ENCODE measurements at regions of chr6 and their contacts with region 1.

Region 1: GRCh38 chr6:145734486-145735355 is 599 bp downstream of the EPM2A start:
- DNase-seq: peak; percentile 78 to 85
- ATAC-seq: peak; percentile 84 to 89
- H3K4me3 ChIP-seq: peak overlapping the region; percentile 75 to 86 (median 81)
- H3K27ac ChIP-seq: peak overlapping the region; percentile 90 to 99 (median 94)
- H3K4me1 ChIP-seq: peaks cover 15 to 31% of the 10 kb centered on the region in 2 donors
- H3K27me3 ChIP-seq: no peaks in the 10 kb centered on the region
- CTCF ChIP-seq: no peak
- POLR2A ChIP-seq: no peak

Region 2: GRCh38 chr6:144840619-144841018 is 894.1 kb before region 1 on chr6:
- in situ Hi-C with region 1: no loop called
- intact Hi-C with region 1: no loop called
- DNase-seq: no peak
- ATAC-seq: no peak
- H3K4me3 ChIP-seq: no peak overlapping the region
- H3K27ac ChIP-seq: no peak overlapping the region
- H3K4me1 ChIP-seq: no peaks in the 10 kb centered on the region
- H3K27me3 ChIP-seq: no peaks in the 10 kb centered on the region
- CTCF ChIP-seq: no peak
- POLR2A ChIP-seq: no peak

Region 3: DNA sequence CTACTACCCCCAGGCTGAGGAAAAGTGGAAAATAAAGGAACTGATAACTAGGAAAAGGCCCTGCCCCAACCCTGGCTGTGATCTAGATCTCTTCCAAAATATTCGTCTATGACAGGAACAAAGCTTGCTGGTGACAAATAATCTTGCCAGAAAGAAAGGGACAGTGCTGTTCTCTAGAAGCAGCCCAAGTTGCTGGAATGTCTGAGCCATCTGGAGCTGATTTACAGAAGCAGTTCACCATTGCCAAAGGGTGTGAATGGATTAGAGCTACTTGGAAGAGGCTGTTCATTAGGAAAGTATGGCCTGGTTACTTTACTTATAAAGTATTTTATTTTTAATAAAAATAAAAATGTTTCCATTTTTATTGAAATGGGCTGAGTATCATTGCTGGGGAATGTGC is 145.7 kb before region 1 on chr6:
- in situ Hi-C with region 1: no loop called
- intact Hi-C with region 1: no loop called
- DNase-seq: no peak
- ATAC-seq: no peak
- H3K4me3 ChIP-seq: no peak overlapping the region
- H3K27ac ChIP-seq: no peak overlapping the region
- H3K4me1 ChIP-seq: no peaks in the 10 kb centered on the region
- H3K27me3 ChIP-seq: no peaks in the 10 kb centered on the region
- CTCF ChIP-seq: no peak
- POLR2A ChIP-seq: no peak

Region 4: DNA sequence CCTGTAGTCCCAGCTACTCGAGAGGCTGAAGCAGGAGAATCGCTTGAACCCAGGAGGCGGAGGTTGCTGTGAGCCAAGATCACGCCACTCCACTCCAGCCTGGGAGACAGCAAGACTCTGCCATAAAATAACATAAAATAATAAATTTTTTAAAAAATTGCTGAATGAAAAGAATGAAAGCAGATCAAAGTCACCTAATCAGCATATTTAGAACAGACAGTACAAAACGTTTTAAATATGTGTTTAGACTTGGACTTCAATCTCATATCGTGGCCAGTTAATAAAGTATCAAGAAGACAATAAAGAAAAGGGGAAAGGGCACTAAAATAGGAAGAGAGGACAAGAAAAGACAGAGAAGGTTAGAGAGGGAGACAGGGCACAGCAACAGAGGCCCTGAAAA is 74.0 kb before region 1 on chr6:
- in situ Hi-C with region 1: no loop called
- intact Hi-C with region 1: no loop called
- DNase-seq: no peak
- ATAC-seq: no peak
- H3K4me3 ChIP-seq: no peak overlapping the region
- H3K27ac ChIP-seq: no peak overlapping the region
- H3K4me1 ChIP-seq: no peaks in the 10 kb centered on the region
- H3K27me3 ChIP-seq: no peaks in the 10 kb centered on the region
- CTCF ChIP-seq: no peak
- POLR2A ChIP-seq: no peak

Region 5: DNA sequence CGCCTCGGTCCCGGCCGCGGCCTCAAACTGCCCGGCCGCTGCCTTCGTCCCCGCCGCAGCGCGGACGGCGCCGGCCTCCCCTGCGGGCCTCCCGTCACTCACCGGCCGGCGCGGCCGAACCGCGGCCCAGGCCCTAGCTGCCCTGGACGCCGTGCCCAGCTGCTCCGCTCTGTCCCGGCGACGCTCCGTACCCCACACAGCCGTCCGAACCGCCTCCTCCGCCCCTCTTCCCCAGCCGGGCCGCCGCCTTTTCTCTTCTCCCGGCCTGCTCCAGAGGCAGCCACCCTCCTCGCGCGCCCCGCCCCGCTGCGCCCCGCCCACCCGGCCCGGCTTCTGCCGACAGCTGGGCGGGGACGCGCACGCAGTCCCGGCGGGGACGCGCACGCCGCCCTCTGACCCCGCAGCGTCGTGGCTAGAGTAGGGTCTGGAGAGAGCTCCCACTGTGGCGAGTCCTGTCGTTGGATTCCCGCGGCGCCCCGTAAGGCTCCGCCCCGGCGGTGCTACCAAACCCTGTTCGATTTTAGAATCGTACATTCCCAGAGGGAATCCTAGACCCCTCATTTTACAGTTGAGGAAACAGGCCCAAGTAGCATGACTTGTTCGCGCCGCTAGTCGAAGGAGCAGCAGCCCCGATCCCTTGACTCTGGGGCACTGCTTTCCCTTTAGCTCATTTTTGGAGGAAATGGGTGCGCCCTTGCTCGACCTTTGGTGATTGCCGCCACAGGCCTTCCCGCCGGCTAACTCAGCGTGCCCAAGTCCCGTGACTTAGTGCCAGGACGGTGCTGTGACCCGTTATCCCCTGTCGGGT is 80.0 kb after region 1 on chr6 and contains the start of gene FBXO30:
- in situ Hi-C with region 1: loop called in 3 of 4 experiments (anchors 5 to 10 kb)
- intact Hi-C with region 1: loop called (anchors 1 kb)
- DNase-seq: peak; percentile 76 to 88
- ATAC-seq: peak; percentile 79 to 82
- H3K4me3 ChIP-seq: peak within 1 kb of the TSS; percentile 76 to 95 (median 84)
- H3K27ac ChIP-seq: peak within 1 kb of the TSS; percentile 91 to 99 (median 94)
- H3K4me1 ChIP-seq: peaks cover 45 to 54% of the 10 kb centered on the region in 2 donors
- H3K27me3 ChIP-seq: no peaks in the 10 kb centered on the region
- CTCF ChIP-seq: peak in 3 of 5 experiments; percentile 28 to 41 (median 29)
- POLR2A ChIP-seq: peak; percentile 89 to 95
- total RNA-seq, gene FBXO30: 8.6 to 38.3 (median 17.7) TPM

Region 6: GRCh38 chr6:145823328-145823944 is 88.7 kb after region 1 on chr6:
- in situ Hi-C with region 1: loop called (anchors 5 to 10 kb)
- intact Hi-C with region 1: no loop called
- DNase-seq: no peak
- ATAC-seq: no peak
- H3K4me3 ChIP-seq: no peak overlapping the region
- H3K27ac ChIP-seq: peak overlapping the region in 1 of 4 donors; percentile 63
- H3K4me1 ChIP-seq: peaks cover 17 to 36% of the 10 kb centered on the region in 2 donors
- H3K27me3 ChIP-seq: no peaks in the 10 kb centered on the region
- CTCF ChIP-seq: no peak
- POLR2A ChIP-seq: no peak

Region 7: GRCh38 chr6:145895802-145896201 is 161.1 kb after region 1 on chr6:
- in situ Hi-C with region 1: no loop called
- intact Hi-C with region 1: loop called (anchors 5 kb)
- DNase-seq: no peak
- ATAC-seq: no peak
- H3K4me3 ChIP-seq: no peak overlapping the region
- H3K27ac ChIP-seq: no peak overlapping the region
- H3K4me1 ChIP-seq: peaks cover 14 to 30% of the 10 kb centered on the region in 2 donors
- H3K27me3 ChIP-seq: no peaks in the 10 kb centered on the region
- CTCF ChIP-seq: peak in 1 of 5 experiments; percentile 19
- POLR2A ChIP-seq: no peak

Region 8: DNA sequence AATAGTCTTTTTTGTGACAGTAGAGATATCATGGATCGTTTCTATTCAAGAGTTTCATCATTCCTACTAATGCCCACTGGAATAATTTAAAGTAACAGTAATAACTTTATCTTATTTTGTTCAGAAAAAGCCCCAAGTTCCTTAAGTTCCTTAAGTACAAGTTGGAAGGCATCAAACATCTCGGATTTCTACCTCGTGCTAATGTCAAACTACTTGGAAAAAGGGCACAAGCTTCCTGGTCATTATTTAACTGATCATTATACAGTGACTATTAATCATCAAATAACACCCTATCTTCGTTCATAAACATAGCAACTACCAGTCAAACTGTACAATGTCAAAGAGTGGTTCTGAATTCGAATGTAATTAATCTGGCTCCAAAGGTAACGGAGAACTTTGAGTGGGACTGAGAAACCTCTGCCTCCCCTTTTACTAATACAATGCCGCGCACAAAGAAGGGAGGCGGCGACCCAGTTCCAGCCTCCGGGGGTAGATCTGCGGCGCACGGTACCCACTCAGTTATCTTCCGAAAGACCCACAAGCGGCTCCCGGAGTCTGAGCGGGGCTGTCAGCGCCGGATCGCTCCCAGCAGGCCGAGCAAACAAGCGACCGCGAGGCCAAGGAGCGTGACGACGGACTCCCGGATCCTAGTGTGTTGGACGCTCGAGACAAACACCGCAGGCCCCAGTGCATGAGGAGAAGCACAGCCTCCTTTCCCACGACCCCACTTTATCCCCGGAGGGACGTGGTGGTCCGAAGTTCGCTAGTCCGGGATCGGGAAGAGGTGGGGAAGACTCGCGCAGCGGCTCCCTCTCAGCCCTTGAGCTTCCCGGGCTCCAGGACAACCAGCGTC is 228.7 kb after region 1 on chr6:
- in situ Hi-C with region 1: no loop called
- intact Hi-C with region 1: loop called (anchors 2 kb)
- DNase-seq: peak in 1 of 2 donors; percentile 33
- ATAC-seq: peak; percentile 54 to 56
- H3K4me3 ChIP-seq: peak overlapping the region; percentile 77 to 90 (median 84)
- H3K27ac ChIP-seq: peak overlapping the region; percentile 86 to 96 (median 89)
- H3K4me1 ChIP-seq: peaks cover 30 to 33% of the 10 kb centered on the region in 2 donors
- H3K27me3 ChIP-seq: no peaks in the 10 kb centered on the region
- CTCF ChIP-seq: no peak
- POLR2A ChIP-seq: no peak

Region 9: DNA sequence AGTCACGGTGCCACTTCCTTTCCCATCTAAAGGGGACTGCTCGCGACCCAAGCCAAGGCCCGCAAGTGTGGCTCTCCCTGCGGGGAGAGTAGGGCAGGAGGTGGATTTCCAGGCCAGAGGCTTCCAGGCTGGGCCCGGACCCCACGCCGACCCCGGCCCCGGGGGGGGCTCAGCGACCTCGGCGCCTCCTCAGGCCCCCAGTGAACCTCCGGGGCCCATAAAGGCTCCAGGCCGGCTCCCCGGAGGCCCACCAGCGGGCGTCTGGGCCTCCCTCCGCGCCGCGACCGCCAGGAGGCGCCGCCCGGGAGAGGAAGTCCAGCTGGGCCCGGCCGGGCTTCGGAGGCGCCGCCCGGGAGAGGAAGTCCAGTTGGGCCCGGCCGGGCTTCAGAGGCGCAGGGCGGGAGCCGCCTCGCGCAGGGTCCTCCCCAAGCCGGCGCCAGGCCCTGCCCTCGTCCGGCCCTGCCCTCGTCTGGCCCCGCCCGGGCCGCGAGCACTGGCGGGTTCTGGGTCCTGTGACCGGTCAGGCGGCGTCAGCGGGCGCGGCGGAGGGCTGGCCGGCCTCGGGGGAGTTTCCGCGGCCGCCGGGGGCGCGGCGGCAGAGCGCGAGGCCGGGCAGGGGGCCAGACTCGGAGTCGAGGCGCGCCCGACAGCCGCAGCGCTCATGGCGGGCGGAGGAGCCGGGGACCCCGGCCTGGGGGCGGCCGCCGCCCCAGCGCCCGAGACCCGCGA is 808.7 kb after region 1 on chr6 and contains the start of gene RAB32:
- in situ Hi-C with region 1: no loop called
- intact Hi-C with region 1: loop called (anchors 5 kb)
- DNase-seq: peak; percentile 72 to 80
- ATAC-seq: peak; percentile 70 to 76
- H3K4me3 ChIP-seq: peak within 1 kb of the TSS; percentile 61 to 70 (median 67)
- H3K27ac ChIP-seq: peak within 1 kb of the TSS; percentile 81 to 89 (median 84)
- H3K4me1 ChIP-seq: peaks cover 3 to 5% of the 10 kb centered on the region in 2 donors
- H3K27me3 ChIP-seq: no peaks in the 10 kb centered on the region
- CTCF ChIP-seq: peak; percentile 30 to 70 (median 53)
- POLR2A ChIP-seq: peak; percentile 67 to 85
- total RNA-seq, gene RAB32: 1.2 to 4.3 (median 3.2) TPM

Measured in gastrocnemius medialis (tissue), 4 donors.